ENCODE measurements at regions of chr1 and their contacts with region 1.

Region 1: DNA sequence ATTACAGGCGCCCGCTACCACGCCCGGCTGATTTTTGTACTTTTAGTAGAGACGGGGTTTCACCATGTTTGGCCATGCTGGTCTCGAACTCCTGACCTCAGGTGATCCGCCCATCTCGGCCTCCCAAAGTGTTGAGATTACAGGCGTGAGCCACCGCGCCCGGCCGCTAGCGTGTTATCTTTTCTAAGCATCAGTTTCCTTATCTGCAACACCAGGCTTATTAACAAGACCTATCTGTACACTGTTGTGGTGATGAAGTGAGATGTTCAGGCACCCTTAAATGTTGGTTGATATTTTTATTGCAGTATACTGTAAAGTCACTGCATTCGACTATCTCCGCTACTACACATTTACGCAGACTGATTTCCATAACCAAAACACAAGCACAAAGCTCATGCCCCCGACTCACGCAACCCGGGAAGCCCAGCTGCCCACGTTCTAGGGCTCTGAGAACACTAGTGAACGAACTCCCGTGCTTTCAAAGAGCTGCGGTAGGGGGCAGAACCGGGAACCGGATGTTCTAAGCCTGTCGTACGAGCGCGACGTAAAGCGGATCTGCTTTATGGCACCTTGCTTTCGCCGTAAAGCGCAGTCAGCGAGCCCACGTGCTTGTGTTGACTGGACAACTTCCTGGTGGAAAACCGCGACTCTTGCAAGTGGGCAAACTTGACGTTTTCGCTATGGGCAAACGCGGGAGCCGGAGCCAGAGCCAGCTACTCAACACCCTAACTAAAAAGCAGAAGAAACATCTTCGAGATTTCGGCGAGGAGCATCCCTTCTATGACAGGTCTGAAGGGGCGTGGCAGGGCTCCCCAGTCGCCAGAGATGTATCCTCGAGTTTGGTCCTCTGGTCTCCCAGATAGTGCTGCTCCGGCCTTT is at the start of gene UTP25:
- DNase-seq: peak; percentile 80 to 98 (median 89)

Region 2: GRCh38 chr1:209784265-209785169 is 43.1 kb before region 1 on chr1 and contains the start of gene C1orf74:
- intact Hi-C with region 1: loop called (anchors 2 kb)
- DNase-seq: peak; percentile 97 to 100 (median 99)

Region 3: DNA sequence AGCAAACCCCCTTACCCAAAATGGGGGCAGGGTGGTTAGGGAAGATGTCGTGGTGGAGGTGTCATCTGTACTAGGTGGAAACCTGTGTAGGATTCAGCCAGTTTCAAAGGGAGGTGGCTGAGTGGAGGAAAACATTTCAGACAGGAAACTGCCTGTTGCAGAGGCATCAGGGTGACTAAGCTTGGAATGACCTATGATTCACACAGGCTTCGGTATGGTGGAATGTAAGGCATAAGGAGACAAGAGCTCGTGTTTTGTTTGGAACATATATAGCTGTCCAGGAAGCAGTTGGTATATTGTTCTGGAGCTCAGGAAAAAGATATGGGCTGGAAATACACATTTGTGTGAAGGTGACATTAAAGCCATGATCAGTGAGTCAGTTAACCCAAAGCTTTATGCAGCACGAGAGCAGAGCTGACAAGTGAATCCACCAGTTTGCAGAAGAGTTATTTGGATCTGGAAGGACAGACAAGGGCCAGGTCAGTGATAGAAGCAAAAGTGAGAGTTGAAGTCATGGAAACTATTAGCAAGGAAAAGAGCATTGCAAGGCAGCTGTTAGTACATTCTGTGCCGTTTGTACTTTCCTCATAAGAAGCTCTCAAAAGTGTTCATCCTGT is 12.4 kb after region 1 on chr1:
- intact Hi-C with region 1: loop called (anchors 1 kb)
- DNase-seq: no peak